ENCODE measurements at regions of chr2 and their contacts with region 1.

Region 1: DNA sequence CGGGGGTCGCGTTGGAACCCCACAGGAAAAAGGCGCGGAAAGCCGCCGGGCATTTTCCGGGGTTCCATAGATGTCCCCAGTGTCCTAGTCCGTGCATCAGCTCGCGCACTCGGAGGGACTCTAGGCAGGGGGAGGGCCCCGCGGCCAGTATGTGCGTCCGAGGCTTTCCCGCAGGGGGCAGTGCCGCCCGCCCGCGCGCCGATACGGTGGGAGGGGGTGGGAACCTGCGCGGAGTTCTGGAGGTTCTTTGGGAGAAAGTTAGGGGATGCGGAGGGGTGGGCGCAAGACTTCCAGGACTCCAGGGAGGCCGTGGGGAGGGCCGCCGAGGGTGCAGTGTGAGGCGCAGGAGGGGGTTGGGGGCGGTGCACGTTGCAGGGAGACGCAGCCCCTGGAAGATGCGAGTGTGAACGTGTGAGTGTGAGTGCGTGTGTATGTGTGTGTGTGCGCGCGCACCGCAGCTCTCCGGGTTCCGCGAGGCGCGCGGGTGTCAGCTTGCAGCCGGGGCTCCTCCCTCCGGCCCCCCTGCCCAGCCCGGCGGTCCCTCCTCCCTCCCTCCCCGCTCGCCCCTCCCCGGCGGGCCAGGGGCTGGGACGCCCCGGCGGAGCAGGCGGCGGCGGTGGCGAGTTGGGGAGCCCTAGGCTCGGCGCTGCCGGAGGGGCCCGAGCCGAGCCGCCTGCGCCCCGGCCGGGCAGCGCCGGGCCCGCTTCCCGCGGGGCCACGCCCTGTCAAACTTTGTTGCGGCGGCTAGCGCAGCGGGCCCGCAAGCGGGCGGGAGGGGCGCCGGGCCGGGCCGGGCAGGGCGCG is at the start of gene TCF7L1:
- ATAC-seq: peak; percentile 81 to 91 (median 86)
- H3K4me3 ChIP-seq: peak within 1 kb of the TSS; percentile 42 to 68 (median 48)
- H3K27ac ChIP-seq: peak within 1 kb of the TSS; percentile 17 to 71
- H3K4me1 ChIP-seq: peaks cover 2 to 9% of the 10 kb centered on the region in 2 donors
- total RNA-seq, gene TCF7L1: 1.4 to 10.1 (median 3.4) TPM

Region 2: GRCh38 chr2:85288244-85288725 is 155.2 kb after region 1 on chr2:
- in situ Hi-C with region 1: loop called in 6 of 9 experiments (anchors 10 to 25 kb)
- ATAC-seq: peak in 2 of 8 experiments; percentile 64 to 78
- H3K4me3 ChIP-seq: no peak overlapping the region
- H3K27ac ChIP-seq: no peak overlapping the region
- H3K4me1 ChIP-seq: peaks cover 2 to 3% of the 10 kb centered on the region in 2 donors

Region 3: GRCh38 chr2:85308896-85309555 is 176.0 kb after region 1 on chr2:
- in situ Hi-C with region 1: no loop called
- ATAC-seq: peak; percentile 39 to 91 (median 70)
- H3K4me3 ChIP-seq: no peak overlapping the region
- H3K27ac ChIP-seq: no peak overlapping the region
- H3K4me1 ChIP-seq: peaks cover 3 to 10% of the 10 kb centered on the region in 2 donors

Region 4: GRCh38 chr2:85873679-85874078 is 740.6 kb after region 1 on chr2:
- in situ Hi-C with region 1: no loop called
- ATAC-seq: peak in 1 of 8 experiments; percentile 44
- H3K4me3 ChIP-seq: no peak overlapping the region
- H3K27ac ChIP-seq: no peak overlapping the region
- H3K4me1 ChIP-seq: no peaks in the 10 kb centered on the region